ENCODE measurements at regions of chr1 and their contacts with region 1.

Region 1: DNA sequence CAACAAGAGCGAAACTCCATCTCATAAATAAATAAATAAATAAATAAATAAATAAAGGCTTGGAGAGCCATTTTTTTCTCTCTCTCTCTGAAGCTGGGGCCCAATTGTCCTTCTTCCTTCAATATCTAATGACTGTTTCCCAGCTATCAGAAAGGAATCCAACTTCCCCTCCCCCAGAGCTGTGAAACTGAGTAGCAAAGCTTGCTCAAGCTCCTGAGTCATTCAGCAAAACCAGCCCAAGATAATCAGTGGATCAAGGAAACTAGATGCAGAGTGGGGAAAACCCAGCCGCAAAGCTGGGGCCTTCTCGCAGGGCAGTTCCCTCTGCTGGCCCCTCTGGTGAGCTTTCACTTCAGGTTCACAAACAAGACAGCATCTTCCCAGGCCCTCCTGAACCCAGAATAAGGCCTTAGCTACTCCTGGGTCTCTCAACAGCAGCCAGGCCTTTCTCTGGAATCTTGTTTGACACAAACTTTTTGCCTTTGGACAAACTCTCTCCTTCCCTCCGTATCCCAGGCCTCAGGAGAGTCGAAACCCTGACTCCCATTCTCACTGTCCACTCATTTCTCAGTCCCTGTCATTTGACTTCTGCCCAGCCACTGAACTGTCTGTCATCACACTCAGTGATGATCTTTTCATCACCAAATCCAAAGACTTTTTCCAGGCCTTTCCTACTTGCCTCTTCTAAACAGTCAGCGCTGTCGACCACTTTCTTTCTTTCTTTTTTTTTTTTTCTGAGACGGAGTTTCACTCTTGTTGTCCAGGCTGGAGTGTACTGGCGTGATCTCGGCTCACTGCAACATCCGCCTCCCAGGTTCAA is 18.0 kb upstream of the PTP4A2 start:
- DNase-seq: peak; percentile 85
- ATAC-seq: peak; percentile 96
- H3K4me3 ChIP-seq: no peak overlapping the region
- H3K4me3 Mint-ChIP-seq: peak overlapping the region; percentile 51
- H3K27ac ChIP-seq: peak overlapping the region; percentile 65 to 82
- H3K27ac Mint-ChIP-seq: peak overlapping the region; percentile 77
- H3K4me1 ChIP-seq: peaks cover 26 to 36% of the 10 kb centered on the region in 2 donors
- H3K4me1 Mint-ChIP-seq: peaks cover 28% of the 10 kb centered on the region
- H3K27me3 ChIP-seq: no peaks in the 10 kb centered on the region
- H3K27me3 Mint-ChIP-seq: no peaks in the 10 kb centered on the region
- CTCF ChIP-seq: peak; percentile 33

Region 2: DNA sequence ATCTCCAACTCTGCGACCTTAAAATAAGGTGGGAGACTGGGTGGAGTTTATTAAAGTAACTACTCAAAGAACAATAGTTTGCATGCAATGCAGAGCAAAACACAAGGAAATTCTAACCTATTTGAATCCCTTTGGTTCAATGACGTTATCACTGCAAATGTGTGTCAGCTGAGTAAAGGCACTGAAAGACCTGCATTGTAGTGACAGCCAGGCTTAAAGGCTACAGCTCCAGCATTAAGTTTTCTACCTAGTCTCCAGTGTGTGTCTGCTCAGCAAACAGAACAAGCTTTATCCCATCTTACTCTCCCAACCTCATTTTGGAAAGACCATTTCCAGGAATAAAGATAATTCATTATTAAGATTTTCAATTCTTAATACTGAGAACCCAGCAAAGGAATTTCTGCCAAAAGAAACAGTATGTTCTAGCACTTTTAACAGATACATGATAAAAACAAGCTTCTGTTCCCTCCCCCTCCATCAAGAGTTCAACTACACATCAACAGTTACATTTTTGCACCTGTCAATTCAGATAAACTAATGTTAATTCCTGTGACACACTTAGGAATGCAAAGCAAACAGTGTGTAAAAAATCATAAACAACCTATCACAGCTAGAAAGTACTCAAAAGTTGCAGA is 32.1 kb before region 1 on chr1:
- CTCF ChIA-PET with region 1: interaction called, 6 read pairs
- POLR2A ChIA-PET with region 1: no interaction called
- intact Hi-C with region 1: loop called (anchors 5 kb)
- DNase-seq: no peak
- ATAC-seq: no peak
- H3K4me3 ChIP-seq: no peak overlapping the region
- H3K4me3 Mint-ChIP-seq: peak overlapping the region; percentile 19
- H3K27ac ChIP-seq: peak overlapping the region in 1 of 2 donors; percentile 18
- H3K27ac Mint-ChIP-seq: peak overlapping the region; percentile 67
- H3K4me1 ChIP-seq: peaks cover 57 to 71% of the 10 kb centered on the region in 2 donors
- H3K4me1 Mint-ChIP-seq: peaks cover 76% of the 10 kb centered on the region
- H3K27me3 ChIP-seq: no peaks in the 10 kb centered on the region
- H3K27me3 Mint-ChIP-seq: no peaks in the 10 kb centered on the region
- CTCF ChIP-seq: no peak

Region 3: DNA sequence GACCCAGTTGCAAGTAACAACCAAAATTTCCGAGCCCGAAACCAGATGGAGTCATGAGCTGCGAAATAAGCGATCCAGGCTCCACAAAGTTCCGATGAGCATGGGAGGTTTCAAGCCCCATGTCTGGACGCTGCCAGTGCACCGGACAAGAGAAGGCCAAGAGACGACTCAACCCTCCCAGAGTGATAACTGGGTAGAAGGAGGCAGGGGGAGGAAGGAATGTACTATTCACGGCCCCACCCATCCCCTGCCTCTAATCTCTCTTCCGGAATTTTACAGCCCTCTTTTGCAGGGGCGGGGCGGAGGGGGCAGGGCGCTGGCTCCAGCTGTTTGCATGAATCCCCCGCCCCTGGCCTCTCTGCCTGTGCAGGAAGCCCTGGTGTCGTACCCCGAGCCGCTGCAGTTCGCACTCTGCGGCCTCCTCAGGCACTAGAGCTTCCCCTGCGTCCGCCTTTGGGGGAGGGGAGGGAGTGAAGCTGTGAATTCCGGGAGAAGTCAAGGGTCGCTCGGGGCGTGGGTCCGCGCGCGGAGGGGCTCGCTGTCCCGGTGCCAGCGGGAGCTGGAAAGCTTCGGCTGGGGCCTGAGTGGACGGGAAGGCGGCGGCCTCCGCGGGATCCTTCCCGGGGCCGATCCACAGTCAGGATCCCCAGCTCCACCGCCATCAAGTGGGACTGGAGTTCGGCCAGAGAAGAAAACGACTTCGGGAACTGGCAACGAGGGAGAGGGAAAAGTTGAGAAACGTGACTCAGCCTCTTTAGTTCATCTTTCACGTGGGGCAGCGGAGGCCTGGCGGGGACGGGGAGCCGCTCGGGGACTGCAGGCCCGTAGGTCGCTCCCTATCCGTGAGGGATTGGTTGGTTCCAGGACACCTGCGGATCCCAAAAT is 11.7 kb before region 1 on chr1:
- CTCF ChIA-PET with region 1: interaction called, 433 read pairs
- POLR2A ChIA-PET with region 1: interaction called, 11 read pairs
- intact Hi-C with region 1: loop called (anchors 1 kb)
- DNase-seq: peak; percentile 82
- ATAC-seq: peak; percentile 83
- H3K4me3 ChIP-seq: peak overlapping the region; percentile 23 to 88 (median 66)
- H3K4me3 Mint-ChIP-seq: peak overlapping the region; percentile 90
- H3K27ac ChIP-seq: peak overlapping the region; percentile 87 to 88
- H3K27ac Mint-ChIP-seq: peak overlapping the region; percentile 96
- H3K4me1 ChIP-seq: peaks cover 41 to 46% of the 10 kb centered on the region in 2 donors
- H3K4me1 Mint-ChIP-seq: peaks cover 36% of the 10 kb centered on the region
- H3K27me3 ChIP-seq: no peaks in the 10 kb centered on the region
- H3K27me3 Mint-ChIP-seq: no peaks in the 10 kb centered on the region
- CTCF ChIP-seq: no peak

Region 4: DNA sequence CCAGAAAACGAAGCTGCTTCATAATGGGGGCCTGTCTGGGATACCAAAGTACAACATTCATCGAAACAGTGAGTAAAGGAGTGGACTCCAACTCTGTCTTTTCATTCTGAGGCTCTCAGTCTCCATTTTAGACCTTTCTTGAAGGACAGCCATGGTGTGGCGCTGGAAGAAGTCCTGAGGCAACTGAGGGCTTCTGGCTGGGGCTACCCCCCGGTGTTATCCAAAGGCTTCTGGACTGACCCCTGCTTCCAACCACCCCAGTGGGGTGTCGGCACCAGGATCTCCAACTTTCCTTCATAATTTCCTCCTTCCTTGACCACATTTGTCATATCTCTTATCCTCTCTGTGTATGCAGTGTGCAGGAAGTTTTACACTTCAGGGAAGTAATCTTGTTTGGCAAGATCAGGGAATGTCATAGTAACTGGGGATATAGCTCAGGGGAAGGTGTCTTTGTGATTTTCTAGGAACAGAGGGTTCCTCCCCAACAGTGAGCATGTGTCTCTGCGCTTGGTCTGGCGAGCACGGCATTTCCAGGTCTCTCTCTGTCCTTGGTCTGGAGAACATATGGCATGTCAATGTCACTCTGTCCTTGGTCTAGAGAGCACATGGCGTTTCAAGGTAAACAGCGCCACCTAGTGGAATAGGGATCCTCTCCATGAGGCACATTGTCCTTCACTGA is 457.5 kb after region 1 on chr1:
- CTCF ChIA-PET with region 1: no interaction called
- POLR2A ChIA-PET with region 1: no interaction called
- intact Hi-C with region 1: loop called (anchors 5 kb)
- DNase-seq: peak; percentile 86
- ATAC-seq: peak; percentile 57
- H3K4me3 ChIP-seq: no peak overlapping the region
- H3K4me3 Mint-ChIP-seq: no peak overlapping the region
- H3K27ac ChIP-seq: no peak overlapping the region
- H3K27ac Mint-ChIP-seq: no peak overlapping the region
- H3K4me1 ChIP-seq: no peaks in the 10 kb centered on the region
- H3K4me1 Mint-ChIP-seq: peaks cover 2% of the 10 kb centered on the region
- H3K27me3 ChIP-seq: peaks cover 0 to 6% (median 5%) of the 10 kb centered on the region in 4 experiments
- H3K27me3 Mint-ChIP-seq: peaks cover 19% of the 10 kb centered on the region
- CTCF ChIP-seq: peak; percentile 94

Measured in B cell (primary cell).